Activated CD4-positive, alpha-beta memory T cell treated with anti-CD3 and anti-CD28 coated beads for 36 hours (primary cell): ENCODE measurements at regions of chr22 and their contacts with region 1.

Region 1: GRCh38 chr22:38733329-38733723 is 22.5 kb downstream of the SUN2 start:
- DNase-seq: peak; percentile 63
- H3K4me3 Mint-ChIP-seq: peak overlapping the region; percentile 29
- H3K27ac Mint-ChIP-seq: peak overlapping the region; percentile 46
- H3K4me1 Mint-ChIP-seq: peaks cover 39% of the 10 kb centered on the region
- H3K27me3 Mint-ChIP-seq: no peaks in the 10 kb centered on the region

Region 2: DNA sequence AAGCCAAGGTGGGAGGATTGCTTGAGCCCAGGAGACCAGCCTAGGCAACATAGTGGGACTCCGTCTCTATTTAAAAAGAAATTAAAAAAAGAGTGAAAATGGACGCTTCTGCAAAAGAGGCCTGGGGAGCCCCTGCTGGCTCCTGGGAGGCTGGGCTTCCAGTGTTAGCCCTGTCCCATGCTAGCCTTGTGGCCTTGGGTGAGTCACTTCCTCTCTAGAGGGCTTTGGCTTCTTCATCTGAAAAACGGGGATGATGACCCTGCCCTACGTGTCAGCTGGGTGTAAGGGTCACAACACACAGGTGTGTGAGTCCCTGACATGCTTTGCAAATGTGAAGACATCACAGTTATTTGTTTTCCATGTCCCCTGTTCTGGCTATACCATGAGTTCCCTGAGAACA is 110.0 kb before region 1 on chr22:
- CTCF ChIA-PET with region 1: no interaction called
- POLR2A ChIA-PET with region 1: no interaction called
- intact Hi-C with region 1: no loop called
- DNase-seq: peak; percentile 31
- H3K4me3 Mint-ChIP-seq: no peak overlapping the region
- H3K27ac Mint-ChIP-seq: no peak overlapping the region
- H3K4me1 Mint-ChIP-seq: no peaks in the 10 kb centered on the region
- H3K27me3 Mint-ChIP-seq: peaks cover 3% of the 10 kb centered on the region

Region 3: GRCh38 chr22:38638216-38638615 is 95.1 kb before region 1 on chr22:
- CTCF ChIA-PET with region 1: no interaction called
- POLR2A ChIA-PET with region 1: no interaction called
- intact Hi-C with region 1: no loop called
- DNase-seq: no peak
- H3K4me3 Mint-ChIP-seq: no peak overlapping the region
- H3K27ac Mint-ChIP-seq: no peak overlapping the region
- H3K4me1 Mint-ChIP-seq: no peaks in the 10 kb centered on the region
- H3K27me3 Mint-ChIP-seq: peaks cover 9% of the 10 kb centered on the region

Region 4: GRCh38 chr22:38766076-38766777 is 32.9 kb after region 1 on chr22:
- CTCF ChIA-PET with region 1: interaction called, 16 read pairs
- POLR2A ChIA-PET with region 1: no interaction called
- intact Hi-C with region 1: no loop called
- DNase-seq: peak; percentile 55
- H3K4me3 Mint-ChIP-seq: no peak overlapping the region
- H3K27ac Mint-ChIP-seq: no peak overlapping the region
- H3K4me1 Mint-ChIP-seq: no peaks in the 10 kb centered on the region
- H3K27me3 Mint-ChIP-seq: no peaks in the 10 kb centered on the region